ENCODE measurements at regions of chr22 and their contacts with region 1.

Region 1: DNA sequence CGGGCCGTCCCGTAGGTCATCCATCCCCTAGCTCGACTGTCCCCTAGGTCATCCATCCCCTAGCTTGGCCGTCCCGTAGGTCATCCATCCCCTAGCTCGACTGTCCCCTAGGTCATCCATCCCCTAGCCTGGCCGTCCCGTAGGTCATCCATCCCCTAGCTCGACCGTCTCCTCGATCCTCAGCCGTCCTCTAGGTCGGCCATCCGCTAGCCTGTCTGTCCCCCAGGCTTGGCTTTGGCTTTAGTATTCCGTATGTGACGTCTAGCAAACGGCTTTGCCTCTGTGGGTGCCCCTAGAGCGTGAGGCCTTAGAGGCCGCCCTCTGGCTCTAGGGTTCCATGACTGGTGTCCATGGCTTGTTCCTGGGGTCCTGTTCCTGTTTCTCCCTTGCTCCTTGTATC is 40.6 kb upstream of the BID start:
- DNase-seq: no peak
- H3K4me3 ChIP-seq: no peak overlapping the region
- H3K27me3 ChIP-seq: no peaks in the 10 kb centered on the region
- CTCF ChIP-seq: no peak

Region 2: GRCh38 chr22:18152519-18152918 is 337.7 kb after region 1 on chr22:
- CTCF ChIA-PET with region 1: no interaction called
- POLR2A ChIA-PET with region 1: interaction called, 18 read pairs
- DNase-seq: no peak
- H3K4me3 ChIP-seq: no peak overlapping the region
- H3K27me3 ChIP-seq: no peaks in the 10 kb centered on the region
- CTCF ChIP-seq: no peak